Kidney (tissue), 22 donors: ENCODE measurements at regions of chr19 and their contacts with region 1.

Region 1: DNA sequence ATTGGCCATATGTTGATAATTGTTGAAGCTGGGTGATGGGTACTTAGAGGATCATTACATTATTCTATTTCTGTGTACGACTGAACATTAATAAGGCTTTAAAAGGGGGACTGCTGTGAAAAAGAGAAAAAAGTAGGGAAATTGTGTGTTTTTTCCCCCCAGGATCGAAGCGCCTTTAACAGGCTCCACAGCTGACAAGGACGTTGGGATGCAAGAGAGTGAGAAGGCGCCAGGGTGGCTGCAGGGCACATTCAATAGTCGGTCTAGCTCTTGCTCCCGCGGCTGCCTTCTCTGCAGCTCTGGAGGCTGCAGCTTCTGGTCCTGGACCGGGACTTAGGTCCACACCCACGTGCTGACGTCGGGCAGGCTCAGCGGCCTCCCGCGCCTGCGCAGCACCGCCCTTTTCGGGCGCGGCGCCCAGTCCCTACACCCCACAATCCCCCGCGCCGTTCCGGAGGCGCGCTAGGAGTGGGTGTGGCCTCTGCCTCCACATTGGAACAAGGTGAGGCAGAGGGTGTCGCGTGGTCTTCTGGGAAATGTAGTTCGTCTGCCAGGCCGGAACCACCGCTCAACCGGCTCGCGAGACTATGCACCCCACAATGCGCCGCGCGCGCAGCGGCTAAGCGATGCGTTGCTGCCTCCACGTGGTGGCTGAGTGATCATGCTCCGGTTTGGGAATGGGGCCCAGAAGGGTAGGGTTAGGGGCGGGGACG is 4.9 kb upstream of the LRFN3 start:
- DNase-seq: peak; percentile 100
- H3K4me3 ChIP-seq: peak overlapping the region; percentile 35 to 45 (median 36)
- H3K27ac ChIP-seq: peak overlapping the region in 1 of 2 donors; percentile 41
- H3K4me1 ChIP-seq: peaks cover 3 to 9% (median 4%) of the 10 kb centered on the region in 3 donors
- H3K27me3 ChIP-seq: no peaks in the 10 kb centered on the region
- CTCF ChIP-seq: peak; percentile 94

Region 2: GRCh38 chr19:35879770-35880317 is 51.5 kb before region 1 on chr19:
- intact Hi-C with region 1: loop called (anchors 5 kb)
- DNase-seq: peak; percentile 91 to 96 (median 94)
- H3K4me3 ChIP-seq: no peak overlapping the region
- H3K27ac ChIP-seq: no peak overlapping the region
- H3K4me1 ChIP-seq: no peaks in the 10 kb centered on the region
- H3K27me3 ChIP-seq: no peaks in the 10 kb centered on the region
- CTCF ChIP-seq: no peak